Left lung (tissue), 14 donors: ENCODE measurements at regions of chr3 and their contacts with region 1.

Region 1: DNA sequence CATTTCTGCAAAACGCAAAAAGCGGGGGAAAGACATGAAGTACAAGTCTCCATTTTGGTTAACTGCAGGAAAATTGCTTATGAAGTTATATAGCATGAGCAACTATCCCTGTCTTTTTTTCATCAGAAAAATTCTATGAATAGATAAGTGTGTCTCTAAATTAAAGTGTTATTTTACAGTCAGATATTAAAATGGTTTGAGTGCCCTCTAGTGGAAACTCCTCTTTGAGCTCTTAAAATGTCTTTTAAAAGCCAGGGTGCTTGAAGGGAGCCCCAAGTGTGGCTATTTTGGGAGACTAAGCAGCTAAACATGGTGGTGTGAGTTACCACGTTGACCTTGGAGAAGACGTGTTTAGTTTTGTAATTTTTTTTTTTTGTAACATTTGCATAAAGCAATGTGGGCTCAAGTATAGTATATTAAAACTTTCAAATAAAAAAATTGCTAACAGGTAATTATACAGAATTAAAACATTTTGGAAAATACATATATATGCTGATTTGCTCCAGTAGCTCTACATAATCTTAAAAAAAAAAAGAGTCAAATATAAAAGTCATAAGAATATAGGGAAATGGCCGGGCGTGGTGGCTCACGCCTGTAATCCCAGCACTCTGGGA is 77.2 kb downstream of the PPP2R3A start:
- DNase-seq: peak in 2 of 4 donors; percentile 42 to 56
- ATAC-seq: peak; percentile 74
- H3K4me3 ChIP-seq: no peak overlapping the region
- H3K27ac ChIP-seq: no peak overlapping the region
- H3K4me1 ChIP-seq: no peaks in the 10 kb centered on the region
- H3K27me3 ChIP-seq: no peaks in the 10 kb centered on the region
- CTCF ChIP-seq: peak; percentile 22 to 51

Region 2: DNA sequence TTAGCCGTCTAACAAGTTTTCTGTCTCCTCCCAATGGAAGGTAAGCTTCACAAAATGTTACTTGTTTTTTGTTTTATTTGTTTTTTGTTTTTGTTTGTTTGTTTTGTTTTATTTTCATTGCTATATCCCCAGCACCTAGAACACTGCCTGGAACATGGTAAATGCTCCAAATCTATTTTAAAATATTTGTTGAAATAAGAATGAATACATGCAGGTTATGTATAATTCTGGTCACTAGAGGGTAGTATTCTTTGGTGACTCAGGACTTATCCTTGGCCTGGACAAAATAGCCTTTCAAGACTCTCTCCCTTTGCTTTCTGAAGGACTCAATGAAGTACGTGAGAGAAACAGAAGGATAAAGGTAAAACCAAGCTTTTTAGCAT is 124.1 kb before region 1 on chr3:
- intact Hi-C with region 1: loop called in 1 of 2 experiments (anchors 5 kb)
- DNase-seq: no peak
- ATAC-seq: peak; percentile 75
- H3K4me3 ChIP-seq: no peak overlapping the region
- H3K27ac ChIP-seq: no peak overlapping the region
- H3K4me1 ChIP-seq: no peaks in the 10 kb centered on the region
- H3K27me3 ChIP-seq: no peaks in the 10 kb centered on the region
- CTCF ChIP-seq: peak in 1 of 2 donors; percentile 40